Activated naive CD4-positive, alpha-beta T cell treated with anti-CD3 and anti-CD28 coated beads for 36 hours (primary cell): ENCODE measurements at regions of chr13 and their contacts with region 1.

Region 1: DNA sequence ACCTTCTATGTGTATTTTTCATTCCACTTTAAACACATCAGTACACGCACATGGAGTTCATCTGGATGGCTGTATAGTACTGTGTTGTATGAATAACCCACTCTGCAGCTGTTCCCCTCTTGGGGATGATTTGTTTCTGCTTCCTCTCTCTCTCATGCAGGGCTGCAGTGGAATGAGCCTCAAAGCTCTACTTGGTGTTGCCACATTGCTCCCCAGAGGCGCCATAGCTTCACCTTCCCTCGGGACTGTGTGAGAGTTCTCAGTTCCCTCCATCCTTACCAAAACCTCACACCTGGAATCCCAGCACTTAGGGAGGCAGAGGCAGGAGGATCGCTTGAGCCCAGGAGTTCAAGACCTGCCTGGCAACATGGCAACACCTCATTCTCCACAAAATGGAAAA is 28.4 kb upstream of the GPR183 start:
- DNase-seq: no peak
- H3K4me3 Mint-ChIP-seq: no peak overlapping the region
- H3K27ac Mint-ChIP-seq: peak overlapping the region; percentile 20
- H3K4me1 Mint-ChIP-seq: peaks cover 77% of the 10 kb centered on the region
- H3K27me3 Mint-ChIP-seq: no peaks in the 10 kb centered on the region

Region 2: GRCh38 chr13:99347911-99348451 is 12.4 kb after region 1 on chr13:
- CTCF ChIA-PET with region 1: interaction called, 10 read pairs
- intact Hi-C with region 1: loop called (anchors 1 kb)
- DNase-seq: peak; percentile 56
- H3K4me3 Mint-ChIP-seq: no peak overlapping the region
- H3K27ac Mint-ChIP-seq: peak overlapping the region; percentile 6
- H3K4me1 Mint-ChIP-seq: peaks cover 64% of the 10 kb centered on the region
- H3K27me3 Mint-ChIP-seq: no peaks in the 10 kb centered on the region